Gastrocnemius medialis (tissue), 4 donors: ENCODE measurements at regions of chr18 and their contacts with region 1.

Region 1: DNA sequence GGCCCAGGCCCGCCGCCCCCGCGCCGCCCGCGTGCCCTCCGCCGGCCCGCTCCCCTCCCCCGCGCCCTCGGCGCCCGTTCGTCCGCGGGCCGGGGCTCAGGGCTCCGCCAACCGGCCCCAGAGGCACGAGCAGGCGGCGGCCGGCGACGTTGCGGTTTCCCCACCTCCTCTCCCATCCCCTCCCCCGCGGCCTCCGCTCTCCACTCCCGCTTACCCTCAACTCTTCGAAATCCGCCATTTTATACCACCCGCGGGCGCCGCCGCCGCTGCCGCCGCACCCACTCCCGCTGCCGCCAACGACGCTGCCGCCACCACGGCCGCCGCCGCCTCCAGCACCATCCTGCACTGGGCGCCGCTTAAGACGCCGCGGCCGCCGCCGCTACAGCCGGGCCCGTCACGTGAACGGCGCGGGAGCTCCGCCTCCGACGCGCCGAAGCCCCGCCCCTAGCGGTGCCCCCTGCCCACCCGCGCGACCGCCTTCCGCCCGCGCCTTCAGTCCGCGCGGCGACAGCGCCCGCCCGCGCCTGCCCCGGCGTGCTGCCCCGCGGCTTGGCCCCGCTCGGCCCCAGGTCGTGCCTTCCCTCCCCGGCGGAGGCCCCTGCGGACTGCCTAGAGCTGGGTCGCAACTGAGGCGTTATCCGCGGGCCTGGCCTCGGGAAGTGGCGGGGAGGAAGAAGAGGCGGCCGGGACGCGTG is at the starts of genes KATNAL2 and PIAS2:
- DNase-seq: peak; percentile 64 to 80
- ATAC-seq: peak; percentile 83 to 90
- H3K4me3 ChIP-seq: peak within 1 kb of the TSS; percentile 74 to 92 (median 80)
- H3K27ac ChIP-seq: peak within 1 kb of the TSS; percentile 92 to 99 (median 96)
- H3K4me1 ChIP-seq: peaks cover 32 to 36% of the 10 kb centered on the region in 2 donors
- H3K27me3 ChIP-seq: no peaks in the 10 kb centered on the region
- CTCF ChIP-seq: peak in 2 of 5 experiments; percentile 9 to 22
- POLR2A ChIP-seq: peak; percentile 94 to 98
- total RNA-seq, gene KATNAL2: 0.27 to 2.7 (median 0.52) TPM in 3 of 4 donors, not detected in the other
- total RNA-seq, gene PIAS2: 14.9 to 41.2 (median 25.1) TPM

Region 2: DNA sequence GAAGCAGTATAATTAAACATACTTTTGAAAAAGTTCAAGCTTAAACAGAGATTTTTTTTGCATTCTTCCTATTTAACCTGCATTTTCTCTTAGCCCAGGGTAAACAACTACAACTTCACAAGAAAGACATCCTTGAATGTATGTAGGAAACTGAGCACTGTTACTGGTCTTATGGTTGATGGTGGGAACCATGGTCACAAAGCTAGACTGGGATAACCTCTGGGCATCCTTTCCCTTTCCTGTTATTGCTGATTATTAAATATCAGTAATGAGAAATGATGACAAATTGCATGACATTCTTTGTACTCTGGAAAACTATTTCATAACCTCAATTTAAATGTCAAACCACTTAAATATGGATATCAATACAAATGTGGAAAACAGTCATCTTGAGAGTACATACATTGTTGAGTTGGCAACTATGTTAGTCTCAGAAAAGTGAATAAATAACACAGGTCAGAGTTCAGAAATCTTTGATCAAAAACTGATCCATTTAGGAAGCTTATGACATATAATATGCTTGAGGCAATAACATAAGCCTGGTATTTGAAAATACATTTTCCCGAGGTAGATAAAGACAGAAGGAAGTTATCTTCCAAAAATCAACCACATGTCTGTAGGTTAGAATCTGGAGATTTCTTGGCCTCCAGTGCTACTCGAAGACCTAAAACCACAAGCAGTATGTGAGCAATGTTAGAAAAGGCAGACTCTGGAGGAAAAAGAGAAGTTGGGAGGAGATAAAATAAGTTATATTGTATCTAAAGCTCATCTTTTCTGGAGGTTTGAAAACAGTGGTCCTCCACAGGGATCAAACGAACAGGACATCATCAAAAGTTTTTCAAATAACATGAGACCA is 95.2 kb before region 1 on chr18:
- in situ Hi-C with region 1: no loop called
- intact Hi-C with region 1: loop called (anchors 2 kb)
- DNase-seq: no peak
- ATAC-seq: no peak
- H3K4me3 ChIP-seq: no peak overlapping the region
- H3K27ac ChIP-seq: peak overlapping the region in 1 of 4 donors; percentile 73
- H3K4me1 ChIP-seq: peaks cover 14 to 19% of the 10 kb centered on the region in 2 donors
- H3K27me3 ChIP-seq: no peaks in the 10 kb centered on the region
- CTCF ChIP-seq: no peak
- POLR2A ChIP-seq: no peak

Region 3: GRCh38 chr18:46832849-46833248 is 84.4 kb before region 1 on chr18:
- in situ Hi-C with region 1: no loop called
- intact Hi-C with region 1: no loop called
- DNase-seq: no peak
- ATAC-seq: no peak
- H3K4me3 ChIP-seq: no peak overlapping the region
- H3K27ac ChIP-seq: no peak overlapping the region
- H3K4me1 ChIP-seq: peaks cover 0 to 4% of the 10 kb centered on the region in 2 donors
- H3K27me3 ChIP-seq: no peaks in the 10 kb centered on the region
- CTCF ChIP-seq: no peak
- POLR2A ChIP-seq: no peak

Region 4: DNA sequence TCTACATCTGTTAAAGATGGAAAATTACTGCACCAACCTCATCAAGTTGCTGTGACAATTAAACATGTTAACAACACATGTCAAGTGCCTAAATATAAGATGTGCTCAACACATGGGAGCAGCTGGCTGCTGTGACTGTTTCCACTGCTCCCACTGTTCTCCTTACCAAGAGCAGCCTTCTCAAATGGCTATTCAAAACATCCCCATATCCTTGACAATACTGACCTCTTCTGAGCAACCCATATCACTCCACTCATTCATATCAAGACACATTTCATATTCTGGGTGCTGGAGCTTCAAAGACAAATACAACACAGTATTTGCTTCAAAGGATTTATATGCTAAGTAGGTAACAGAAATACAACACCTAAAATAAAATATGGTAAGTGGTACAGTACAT is 60.3 kb before region 1 on chr18:
- in situ Hi-C with region 1: no loop called
- intact Hi-C with region 1: no loop called
- DNase-seq: no peak
- ATAC-seq: peak; percentile 71 to 85
- H3K4me3 ChIP-seq: no peak overlapping the region
- H3K27ac ChIP-seq: no peak overlapping the region
- H3K4me1 ChIP-seq: peaks cover 16 to 18% of the 10 kb centered on the region in 2 donors
- H3K27me3 ChIP-seq: no peaks in the 10 kb centered on the region
- CTCF ChIP-seq: peak in 2 of 5 experiments; percentile 34 to 37
- POLR2A ChIP-seq: no peak

Region 5: GRCh38 chr18:46939337-46939963 is 22.2 kb after region 1 on chr18:
- in situ Hi-C with region 1: no loop called
- intact Hi-C with region 1: loop called (anchors 1 kb)
- DNase-seq: peak; percentile 31 to 70
- ATAC-seq: peak; percentile 99 to 100
- H3K4me3 ChIP-seq: no peak overlapping the region
- H3K27ac ChIP-seq: peak overlapping the region; percentile 60 to 83 (median 80)
- H3K4me1 ChIP-seq: peaks cover 24 to 28% of the 10 kb centered on the region in 2 donors
- H3K27me3 ChIP-seq: no peaks in the 10 kb centered on the region
- CTCF ChIP-seq: no peak
- POLR2A ChIP-seq: no peak

Region 6: DNA sequence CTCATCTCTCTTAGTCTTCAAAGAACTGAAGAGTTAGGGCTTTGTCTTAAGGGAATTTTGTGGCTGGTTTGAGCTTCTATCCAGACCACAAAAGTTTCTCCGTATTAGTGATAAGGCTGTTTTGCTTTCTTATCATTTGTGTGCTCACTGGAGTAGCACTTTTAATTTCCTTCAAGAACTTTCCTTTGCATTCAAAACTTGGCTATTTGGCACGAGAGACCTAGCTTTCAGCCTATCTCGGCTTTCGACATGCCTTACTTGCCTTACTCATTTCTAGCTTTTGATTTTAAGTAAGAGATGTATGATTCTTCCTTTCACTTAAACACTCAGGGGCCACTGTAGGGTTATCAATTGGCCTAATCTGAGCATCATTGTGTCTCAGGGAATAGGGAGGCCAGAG is 203.2 kb after region 1 on chr18:
- in situ Hi-C with region 1: no loop called
- intact Hi-C with region 1: no loop called
- DNase-seq: no peak
- ATAC-seq: no peak
- H3K4me3 ChIP-seq: no peak overlapping the region
- H3K27ac ChIP-seq: no peak overlapping the region
- H3K4me1 ChIP-seq: no peaks in the 10 kb centered on the region
- H3K27me3 ChIP-seq: no peaks in the 10 kb centered on the region
- CTCF ChIP-seq: no peak
- POLR2A ChIP-seq: no peak

Region 7: GRCh38 chr18:47163241-47163640 is 246.0 kb after region 1 on chr18:
- in situ Hi-C with region 1: no loop called
- intact Hi-C with region 1: no loop called
- DNase-seq: no peak
- ATAC-seq: no peak
- H3K4me3 ChIP-seq: no peak overlapping the region
- H3K27ac ChIP-seq: no peak overlapping the region
- H3K4me1 ChIP-seq: peaks cover 3 to 8% of the 10 kb centered on the region in 2 donors
- H3K27me3 ChIP-seq: no peaks in the 10 kb centered on the region
- CTCF ChIP-seq: no peak
- POLR2A ChIP-seq: no peak